ENCODE measurements at regions of chr4 and their contacts with region 1.

Region 1: GRCh38 chr4:25312496-25313200 is at the start of gene ZCCHC4:
- DNase-seq: peak; percentile 93
- H3K4me3 ChIP-seq: peak within 1 kb of the TSS; percentile 62 to 84 (median 82)
- H3K27ac ChIP-seq: peak within 1 kb of the TSS; percentile 77 to 82 (median 80)
- H3K4me1 ChIP-seq: peaks cover 10 to 24% (median 10%) of the 10 kb centered on the region in 4 donors
- H3K27me3 ChIP-seq: no peaks in the 10 kb centered on the region
- CTCF ChIP-seq: peak in 2 of 3 experiments; percentile 93 to 94
- EP300 ChIP-seq: no peak
- POLR2A ChIP-seq: no peak
- total RNA-seq, gene ZCCHC4: 8.6 to 16.2 (median 11.4) TPM

Region 2: DNA sequence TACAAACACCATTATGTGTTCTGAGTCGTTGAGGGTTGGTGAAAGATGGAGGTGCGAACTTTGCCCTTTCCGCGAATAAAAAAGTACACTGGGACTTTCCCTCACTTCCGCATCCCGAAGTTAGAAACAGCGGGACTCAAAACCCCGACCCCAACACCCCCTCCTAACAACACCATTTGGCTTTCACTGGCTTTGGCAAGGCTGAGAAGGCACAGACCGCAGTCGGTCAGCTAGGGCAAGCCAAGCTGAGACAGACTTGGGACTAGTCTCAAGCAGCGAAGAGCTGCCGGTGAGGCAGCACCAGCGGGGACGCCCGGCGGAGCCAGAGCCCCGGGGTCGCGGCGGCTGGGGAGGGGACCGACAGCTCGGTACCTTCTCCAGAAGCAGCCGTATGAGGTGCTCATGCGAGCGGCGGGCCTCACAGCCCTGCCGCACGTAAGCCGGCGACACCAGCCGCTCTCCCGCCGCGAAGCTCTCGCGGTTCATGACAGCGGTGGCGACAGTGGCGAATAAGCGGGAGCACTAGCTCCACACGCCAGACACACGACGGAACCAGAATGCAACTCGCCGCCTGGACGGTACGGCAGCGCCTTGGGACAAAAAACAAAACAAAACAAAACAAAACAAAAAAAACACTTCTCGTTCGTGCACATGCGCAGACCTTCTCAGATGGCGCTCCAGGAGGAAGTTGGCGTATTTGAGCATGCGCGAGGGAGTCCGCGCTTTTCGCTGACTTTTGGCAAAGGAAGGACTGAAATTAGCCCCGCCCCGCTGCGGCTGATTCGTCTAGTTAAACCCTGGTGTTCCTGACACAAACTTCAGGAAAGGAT is 152.5 kb before region 1 on chr4 and contains the start of gene SEPSECS:
- intact Hi-C with region 1: loop called (anchors 10 kb)
- DNase-seq: peak; percentile 99
- H3K4me3 ChIP-seq: peak within 1 kb of the TSS; percentile 82 to 92 (median 87)
- H3K27ac ChIP-seq: peak within 1 kb of the TSS; percentile 96 to 97 (median 97)
- H3K4me1 ChIP-seq: peaks cover 14 to 24% (median 22%) of the 10 kb centered on the region in 4 donors
- H3K27me3 ChIP-seq: no peaks in the 10 kb centered on the region
- CTCF ChIP-seq: no peak
- EP300 ChIP-seq: no peak
- POLR2A ChIP-seq: no peak
- total RNA-seq, gene SEPSECS: 3.8 to 6.2 (median 4.0) TPM

Region 3: GRCh38 chr4:25234390-25235370 is 78.0 kb before region 1 on chr4:
- intact Hi-C with region 1: loop called (anchors 5 kb)
- DNase-seq: no peak
- H3K4me3 ChIP-seq: peak overlapping the region; percentile 81 to 100 (median 96)
- H3K27ac ChIP-seq: peak overlapping the region; percentile 92 to 99 (median 98)
- H3K4me1 ChIP-seq: peaks cover 8 to 17% (median 14%) of the 10 kb centered on the region in 4 donors
- H3K27me3 ChIP-seq: no peaks in the 10 kb centered on the region
- CTCF ChIP-seq: peak in 2 of 3 experiments; percentile 37 to 58
- EP300 ChIP-seq: no peak
- POLR2A ChIP-seq: no peak

Region 4: GRCh38 chr4:25258981-25259578 is 53.6 kb before region 1 on chr4:
- intact Hi-C with region 1: no loop called
- DNase-seq: no peak
- H3K4me3 ChIP-seq: no peak overlapping the region
- H3K27ac ChIP-seq: no peak overlapping the region
- H3K4me1 ChIP-seq: no peaks in the 10 kb centered on the region
- H3K27me3 ChIP-seq: no peaks in the 10 kb centered on the region
- CTCF ChIP-seq: no peak
- EP300 ChIP-seq: no peak
- POLR2A ChIP-seq: no peak

Region 5: DNA sequence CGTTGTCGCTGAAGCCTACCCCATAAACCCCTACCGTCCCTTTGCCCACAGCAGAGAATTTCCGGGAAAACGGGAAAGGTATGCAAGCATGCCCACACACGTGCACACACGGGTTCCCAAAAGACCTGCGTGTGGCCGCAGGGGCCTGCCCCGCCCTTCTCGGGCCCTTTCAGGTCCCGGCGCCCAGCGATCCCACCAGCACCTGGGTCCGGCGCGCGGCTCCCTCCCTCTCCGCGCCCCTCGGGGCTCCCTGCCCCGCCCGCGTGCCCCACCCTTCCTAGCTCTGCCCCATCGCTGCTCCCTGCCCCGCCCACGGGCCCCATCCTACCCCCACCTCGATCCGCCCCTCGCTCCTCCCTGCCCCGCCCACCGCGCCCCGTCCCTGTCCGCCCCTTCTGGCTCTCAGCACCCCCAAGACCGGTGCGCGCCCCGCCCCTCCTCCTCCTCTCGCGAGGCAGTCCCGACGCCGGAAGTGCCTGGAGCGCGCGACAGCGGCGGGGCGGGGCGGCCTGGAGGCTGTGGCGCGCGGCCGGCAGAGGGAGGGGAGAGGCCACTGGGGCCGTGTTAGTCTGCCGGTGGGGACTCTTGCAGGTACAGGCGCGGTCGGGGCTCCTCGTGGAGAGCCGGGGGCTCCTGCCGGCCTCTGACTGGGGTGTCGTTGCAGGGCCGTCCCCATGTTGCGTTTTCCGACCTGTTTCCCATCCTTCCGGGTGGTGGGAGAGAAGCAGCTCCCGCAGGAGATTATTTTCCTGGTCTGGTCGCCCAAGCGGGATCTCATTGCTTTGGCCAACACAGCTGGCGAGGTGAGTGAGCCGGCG is 64.3 kb after region 1 on chr4 and contains the start of gene ANAPC4:
- intact Hi-C with region 1: loop called (anchors 2 kb)
- DNase-seq: peak; percentile 98
- H3K4me3 ChIP-seq: peak within 1 kb of the TSS; percentile 73 to 92 (median 84)
- H3K27ac ChIP-seq: peak within 1 kb of the TSS; percentile 76 to 82 (median 77)
- H3K4me1 ChIP-seq: peaks cover 0 to 35% (median 23%) of the 10 kb centered on the region in 4 donors
- H3K27me3 ChIP-seq: no peaks in the 10 kb centered on the region
- CTCF ChIP-seq: peak in 2 of 3 experiments; percentile 15 to 17
- EP300 ChIP-seq: no peak
- POLR2A ChIP-seq: peak; percentile 57
- total RNA-seq, gene ANAPC4: 17.2 to 25.3 (median 19.0) TPM

Measured in esophagus muscularis mucosa (tissue), 4 donors.